A673 (cell line): ENCODE measurements at regions of chr9 and their contacts with region 1.

Region 1: DNA sequence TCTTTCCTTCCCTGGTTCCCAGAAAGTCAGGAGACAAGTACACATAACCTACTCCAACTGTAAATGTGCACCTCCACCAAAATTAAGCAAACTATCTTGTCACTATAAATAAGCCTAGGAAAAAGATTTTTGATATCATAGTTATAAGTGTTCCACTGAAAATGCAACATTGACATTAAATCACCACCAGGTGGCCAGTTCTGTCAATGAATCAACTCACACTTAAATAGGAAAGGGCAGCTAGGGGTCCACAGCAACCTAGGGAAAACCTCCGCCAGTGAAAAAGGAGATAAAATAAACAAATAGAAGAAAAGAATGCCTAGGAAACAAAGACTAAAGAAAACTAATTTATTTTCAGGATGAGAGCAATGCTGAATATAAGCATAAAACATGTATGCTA is 243.1 kb upstream of the PTPRD start:
- DNase-seq: peak; percentile 37
- H3K4me3 ChIP-seq: no peak overlapping the region
- H3K27ac ChIP-seq: no peak overlapping the region
- H3K4me1 ChIP-seq: peaks cover 3% of the 10 kb centered on the region
- H3K27me3 ChIP-seq: no peaks in the 10 kb centered on the region
- CTCF ChIP-seq: peak; percentile 55

Region 2: GRCh38 chr9:10875752-10876151 is 19.9 kb after region 1 on chr9:
- CTCF ChIA-PET with region 1: no interaction called
- POLR2A ChIA-PET with region 1: interaction called, 16 read pairs
- intact Hi-C with region 1: no loop called
- DNase-seq: peak; percentile 72
- H3K4me3 ChIP-seq: no peak overlapping the region
- H3K27ac ChIP-seq: peak overlapping the region; percentile 60
- H3K4me1 ChIP-seq: peaks cover 11% of the 10 kb centered on the region
- H3K27me3 ChIP-seq: no peaks in the 10 kb centered on the region
- CTCF ChIP-seq: no peak

Region 3: DNA sequence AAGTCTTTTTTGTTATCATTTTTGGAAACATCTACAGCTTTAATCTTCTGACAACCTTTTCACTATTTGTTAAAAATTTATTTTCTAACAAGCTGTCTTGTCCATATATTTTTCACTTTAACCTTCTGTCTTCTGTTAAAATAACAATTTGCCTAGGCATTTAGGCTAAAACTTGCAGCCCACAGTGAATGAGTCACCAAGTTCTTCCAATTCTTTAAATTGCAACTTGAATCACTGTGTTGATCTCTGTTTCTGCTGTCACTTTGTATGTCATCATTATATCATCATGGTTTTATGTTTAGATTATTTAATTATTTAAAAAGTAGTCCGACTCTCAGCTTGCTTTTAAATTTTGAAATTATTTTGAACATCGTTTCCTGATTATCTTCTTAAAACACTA is 230.7 kb after region 1 on chr9:
- CTCF ChIA-PET with region 1: no interaction called
- POLR2A ChIA-PET with region 1: no interaction called
- intact Hi-C with region 1: loop called (anchors 10 kb)
- DNase-seq: peak; percentile 12
- H3K4me3 ChIP-seq: no peak overlapping the region
- H3K27ac ChIP-seq: peak overlapping the region; percentile 8
- H3K4me1 ChIP-seq: no peaks in the 10 kb centered on the region
- H3K27me3 ChIP-seq: no peaks in the 10 kb centered on the region
- CTCF ChIP-seq: no peak

Region 4: GRCh38 chr9:11319538-11319937 is 463.7 kb after region 1 on chr9:
- CTCF ChIA-PET with region 1: no interaction called
- POLR2A ChIA-PET with region 1: no interaction called
- intact Hi-C with region 1: loop called (anchors 2 kb)
- DNase-seq: peak; percentile 46
- H3K4me3 ChIP-seq: no peak overlapping the region
- H3K27ac ChIP-seq: no peak overlapping the region
- H3K4me1 ChIP-seq: no peaks in the 10 kb centered on the region
- H3K27me3 ChIP-seq: no peaks in the 10 kb centered on the region
- CTCF ChIP-seq: peak; percentile 57

Region 5: GRCh38 chr9:12329623-12329985 is 1473.8 kb after region 1 on chr9:
- CTCF ChIA-PET with region 1: interaction called, 3 read pairs
- POLR2A ChIA-PET with region 1: no interaction called
- intact Hi-C with region 1: loop called (anchors 5 kb)
- DNase-seq: no peak
- H3K4me3 ChIP-seq: no peak overlapping the region
- H3K27ac ChIP-seq: no peak overlapping the region
- H3K4me1 ChIP-seq: no peaks in the 10 kb centered on the region
- H3K27me3 ChIP-seq: no peaks in the 10 kb centered on the region
- CTCF ChIP-seq: no peak; the same call in 1 of the 2 replicates